Activated B cell treated with CpG ODN at 0.5 μM for 24 hours (primary cell): ENCODE measurements at regions of chr11 and their contacts with region 1.

Region 1: DNA sequence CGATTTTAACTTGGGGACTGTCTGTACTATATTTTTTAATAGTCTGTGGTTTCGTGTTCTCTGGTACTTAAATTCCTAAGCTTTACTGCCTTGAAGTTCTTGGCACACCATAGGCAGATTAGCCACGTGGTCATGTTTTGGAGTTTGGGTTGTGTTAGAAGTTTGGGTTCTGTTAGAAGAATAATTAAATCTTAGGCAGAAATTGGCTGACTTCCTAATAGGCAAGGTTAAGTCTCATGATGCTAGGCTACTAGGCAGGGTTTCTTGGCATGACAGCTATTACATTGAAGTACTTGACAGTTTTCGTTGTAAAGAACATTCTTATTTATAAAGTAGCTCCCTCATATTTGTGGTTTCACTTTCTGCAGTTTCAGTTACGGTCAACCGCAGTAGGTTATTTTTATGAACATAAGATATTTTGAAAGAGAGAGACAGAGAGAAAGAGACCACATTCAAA is 30.0 kb upstream of the MMP7 start:
- DNase-seq: no peak
- ATAC-seq: peak; percentile 61
- H3K4me3 Mint-ChIP-seq: peak overlapping the region; percentile 72
- H3K27ac Mint-ChIP-seq: peak overlapping the region; percentile 86
- H3K4me1 Mint-ChIP-seq: peaks cover 63% of the 10 kb centered on the region
- H3K27me3 Mint-ChIP-seq: no peaks in the 10 kb centered on the region
- CTCF ChIP-seq: no peak

Region 2: GRCh38 chr11:102577182-102577581 is 16.6 kb after region 1 on chr11:
- CTCF ChIA-PET with region 1: no interaction called
- POLR2A ChIA-PET with region 1: no interaction called
- intact Hi-C with region 1: loop called (anchors 2 kb)
- DNase-seq: no peak
- ATAC-seq: no peak
- H3K4me3 Mint-ChIP-seq: no peak overlapping the region
- H3K27ac Mint-ChIP-seq: no peak overlapping the region
- H3K4me1 Mint-ChIP-seq: peaks cover 42% of the 10 kb centered on the region
- H3K27me3 Mint-ChIP-seq: no peaks in the 10 kb centered on the region
- CTCF ChIP-seq: no peak

Region 3: DNA sequence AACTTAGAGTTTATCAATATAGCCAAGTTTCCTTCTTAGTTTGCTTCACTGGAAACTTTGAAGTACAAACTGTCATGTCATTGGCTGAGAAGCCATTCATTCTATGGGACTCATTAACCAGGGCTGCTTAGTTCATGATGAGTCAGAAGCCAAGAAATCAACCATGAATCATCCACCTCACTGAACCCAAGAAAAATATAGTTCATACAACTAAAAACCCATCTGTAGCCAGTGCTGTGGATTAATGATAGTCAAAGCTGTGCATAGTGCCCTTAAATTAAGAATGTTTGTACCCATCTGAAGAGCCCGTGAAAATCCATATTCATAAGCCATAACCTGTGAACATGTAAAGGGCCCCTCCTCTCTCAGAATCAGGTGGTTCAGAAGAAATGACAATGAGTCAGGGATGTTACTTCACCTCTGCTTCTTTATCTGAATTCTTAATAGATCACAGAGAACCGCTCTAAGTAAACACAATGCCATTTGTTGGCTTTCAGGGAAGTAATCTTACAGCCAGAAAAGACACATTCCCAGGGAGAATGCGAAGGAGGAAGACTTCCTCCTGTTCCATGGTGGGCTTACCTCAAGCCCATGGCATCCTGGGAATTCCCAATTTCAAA is 39.2 kb after region 1 on chr11:
- CTCF ChIA-PET with region 1: no interaction called
- POLR2A ChIA-PET with region 1: no interaction called
- intact Hi-C with region 1: loop called (anchors 1 kb)
- DNase-seq: no peak
- ATAC-seq: peak; percentile 93
- H3K4me3 Mint-ChIP-seq: no peak overlapping the region
- H3K27ac Mint-ChIP-seq: peak overlapping the region; percentile 32
- H3K4me1 Mint-ChIP-seq: peaks cover 28% of the 10 kb centered on the region
- H3K27me3 Mint-ChIP-seq: no peaks in the 10 kb centered on the region
- CTCF ChIP-seq: no peak